ENCODE measurements at regions of chr3 and their contacts with region 1.

Region 1: DNA sequence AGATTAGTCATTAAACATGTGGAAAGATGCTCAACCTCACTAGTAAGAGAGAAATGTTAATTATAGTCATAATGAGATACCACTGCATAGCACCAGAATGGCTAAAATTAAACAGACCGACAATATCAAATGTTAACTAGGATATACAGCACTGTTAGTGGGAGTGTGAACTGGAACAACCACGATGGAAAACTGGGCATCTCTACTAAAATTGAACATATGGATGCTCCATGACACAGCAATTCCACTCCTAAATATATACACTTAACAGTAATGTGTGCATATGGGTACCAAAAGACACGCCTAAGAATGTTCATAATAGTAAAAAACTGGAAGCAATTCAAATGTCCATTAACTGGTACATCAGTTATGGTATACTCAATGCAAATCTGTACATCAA is 41.5 kb downstream of the CRTAP start:
- DNase-seq: no peak
- H3K4me3 ChIP-seq: no peak overlapping the region
- H3K27ac ChIP-seq: no peak overlapping the region
- H3K4me1 ChIP-seq: peaks cover 3% of the 10 kb centered on the region
- H3K27me3 ChIP-seq: no peaks in the 10 kb centered on the region
- CTCF ChIP-seq: no peak

Region 2: GRCh38 chr3:33194303-33194702 is 39.0 kb after region 1 on chr3:
- CTCF ChIA-PET with region 1: no interaction called
- dilution Hi-C with region 1: loop called (anchors 5 kb)
- in situ Hi-C with region 1: no loop called
- intact Hi-C with region 1: no loop called
- DNase-seq: peak; percentile 51
- H3K4me3 ChIP-seq: no peak overlapping the region
- H3K27ac ChIP-seq: no peak overlapping the region
- H3K4me1 ChIP-seq: peaks cover 5% of the 10 kb centered on the region
- H3K27me3 ChIP-seq: no peaks in the 10 kb centered on the region
- CTCF ChIP-seq: no peak